ENCODE measurements at regions of chr6 and their contacts with region 1.

Region 1: GRCh38 chr6:31729515-31729978 is 448 bp upstream of the DDAH2 start:
- DNase-seq: peak; percentile 95
- ATAC-seq: peak; percentile 90

Region 2: GRCh38 chr6:31702819-31703522 is 26.6 kb before region 1 on chr6 and contains the start of gene ABHD16A:
- intact Hi-C with region 1: loop called (anchors 2 kb)
- DNase-seq: peak; percentile 100
- ATAC-seq: peak; percentile 98
- total RNA-seq, gene ABHD16A: 26.9 TPM

Region 3: DNA sequence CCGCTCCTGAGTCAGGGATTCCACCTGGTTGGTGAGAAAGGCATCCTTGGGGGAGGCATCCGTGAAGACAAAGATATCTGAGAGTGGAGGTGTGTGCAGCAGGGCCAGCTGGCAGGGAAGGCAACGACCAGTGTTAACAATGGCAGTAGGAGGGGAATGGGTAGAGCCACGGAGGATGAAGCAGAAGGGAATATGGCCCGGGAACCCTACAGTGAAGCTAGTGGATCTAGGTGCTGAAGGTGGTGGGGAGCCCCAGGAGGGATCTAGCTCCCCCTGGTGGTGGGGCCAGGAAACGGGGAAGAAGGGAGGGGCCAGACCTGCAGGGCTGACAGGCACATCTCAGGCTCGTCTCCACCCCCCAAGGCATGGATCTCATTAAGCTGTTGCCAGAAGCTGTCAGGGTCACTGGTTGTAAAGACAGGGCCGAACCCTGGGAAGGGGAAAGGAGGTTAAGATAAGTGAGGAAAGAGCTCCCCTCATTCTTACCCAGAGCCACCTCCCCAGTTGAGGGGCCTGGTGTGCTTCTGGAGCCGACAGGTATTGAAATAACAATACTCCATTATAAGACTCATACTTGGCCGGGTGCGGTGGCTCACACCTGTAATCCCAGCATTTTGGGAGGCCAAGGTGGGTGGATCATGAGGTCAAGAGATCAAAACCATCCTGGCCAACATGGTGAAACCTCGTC is 40.3 kb after region 1 on chr6:
- intact Hi-C with region 1: loop called (anchors 2 kb)
- DNase-seq: peak; percentile 90
- ATAC-seq: peak; percentile 70

Region 4: GRCh38 chr6:31795616-31796298 is 66.2 kb after region 1 on chr6 and contains the start of gene VARS1:
- intact Hi-C with region 1: loop called (anchors 5 kb)
- DNase-seq: peak; percentile 97
- ATAC-seq: peak; percentile 96
- total RNA-seq, gene VARS1: 29.7 TPM

Region 5: GRCh38 chr6:31827286-31828079 is 97.9 kb after region 1 on chr6 and contains the start of gene HSPA1B:
- intact Hi-C with region 1: loop called (anchors 1 kb)
- DNase-seq: peak; percentile 100
- ATAC-seq: peak; percentile 96
- total RNA-seq, gene HSPA1B: 215 TPM